Ascending aorta (tissue), 2 donors: ENCODE measurements at regions of chr17 and their contacts with region 1.

Region 1: DNA sequence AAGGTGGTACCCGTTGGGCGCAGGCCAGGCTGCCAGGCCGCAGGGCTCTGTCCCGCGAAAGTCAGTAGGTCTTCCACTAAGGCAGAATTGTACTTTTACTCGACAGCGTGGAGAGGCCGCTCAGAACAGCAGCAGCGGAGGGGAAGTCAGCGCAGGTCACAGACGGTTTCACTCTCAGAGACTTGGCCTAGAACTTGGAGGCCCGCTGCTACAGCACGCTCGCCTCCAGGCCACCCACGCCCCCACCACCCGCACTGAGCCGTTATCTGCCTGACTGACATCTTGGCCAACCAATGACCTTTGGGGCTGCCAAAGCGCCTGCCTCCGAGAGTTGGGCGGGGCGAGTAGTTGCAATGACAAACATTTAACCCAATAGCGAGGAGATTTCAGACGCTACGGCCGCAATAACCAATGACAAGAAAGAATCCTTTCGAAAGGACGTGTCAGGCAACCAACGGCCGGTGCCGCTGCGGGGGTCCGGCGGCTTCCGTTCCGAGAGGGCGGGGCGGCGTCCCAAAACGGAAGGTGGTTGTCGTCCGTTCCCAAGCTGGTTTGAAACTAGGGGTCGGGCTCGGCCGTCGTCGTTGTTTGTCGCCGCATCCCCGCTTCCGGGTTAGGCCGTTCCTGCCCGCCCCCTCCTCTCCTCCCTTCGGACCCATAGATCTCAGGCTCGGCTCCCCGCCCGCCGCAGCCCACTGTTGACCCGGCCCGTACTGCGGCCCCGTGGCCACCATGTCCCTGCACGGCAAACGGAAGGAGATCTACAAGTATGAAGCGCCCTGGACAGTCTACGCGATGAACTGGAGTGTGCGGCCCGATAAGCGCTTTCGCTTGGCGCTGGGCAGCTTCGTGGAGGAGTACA is at the start of gene DCAF7:
- DNase-seq: peak; percentile 97 to 100
- H3K4me3 ChIP-seq: peak within 1 kb of the TSS; percentile 55 to 83
- H3K27ac ChIP-seq: peak within 1 kb of the TSS; percentile 77 to 90
- H3K4me1 ChIP-seq: peaks cover 0 to 15% of the 10 kb centered on the region in 2 donors
- H3K27me3 ChIP-seq: no peaks in the 10 kb centered on the region
- CTCF ChIP-seq: no peak
- total RNA-seq, gene DCAF7: 18.6 TPM

Region 2: GRCh38 chr17:63337579-63337978 is 212.6 kb before region 1 on chr17:
- intact Hi-C with region 1: no loop called
- DNase-seq: no peak
- H3K4me3 ChIP-seq: no peak overlapping the region
- H3K27ac ChIP-seq: no peak overlapping the region
- H3K4me1 ChIP-seq: peaks cover 0 to 3% of the 10 kb centered on the region in 2 donors
- H3K27me3 ChIP-seq: no peaks in the 10 kb centered on the region
- CTCF ChIP-seq: no peak

Region 3: GRCh38 chr17:63433746-63434591 is 116.2 kb before region 1 on chr17:
- intact Hi-C with region 1: loop called (anchors 1 kb)
- DNase-seq: peak; percentile 56 to 93
- H3K4me3 ChIP-seq: peak overlapping the region in 1 of 2 donors; percentile 17
- H3K27ac ChIP-seq: peak overlapping the region in 1 of 2 donors; percentile 45
- H3K4me1 ChIP-seq: peaks cover 21 to 26% of the 10 kb centered on the region in 2 donors
- H3K27me3 ChIP-seq: no peaks in the 10 kb centered on the region
- CTCF ChIP-seq: no peak

Region 4: DNA sequence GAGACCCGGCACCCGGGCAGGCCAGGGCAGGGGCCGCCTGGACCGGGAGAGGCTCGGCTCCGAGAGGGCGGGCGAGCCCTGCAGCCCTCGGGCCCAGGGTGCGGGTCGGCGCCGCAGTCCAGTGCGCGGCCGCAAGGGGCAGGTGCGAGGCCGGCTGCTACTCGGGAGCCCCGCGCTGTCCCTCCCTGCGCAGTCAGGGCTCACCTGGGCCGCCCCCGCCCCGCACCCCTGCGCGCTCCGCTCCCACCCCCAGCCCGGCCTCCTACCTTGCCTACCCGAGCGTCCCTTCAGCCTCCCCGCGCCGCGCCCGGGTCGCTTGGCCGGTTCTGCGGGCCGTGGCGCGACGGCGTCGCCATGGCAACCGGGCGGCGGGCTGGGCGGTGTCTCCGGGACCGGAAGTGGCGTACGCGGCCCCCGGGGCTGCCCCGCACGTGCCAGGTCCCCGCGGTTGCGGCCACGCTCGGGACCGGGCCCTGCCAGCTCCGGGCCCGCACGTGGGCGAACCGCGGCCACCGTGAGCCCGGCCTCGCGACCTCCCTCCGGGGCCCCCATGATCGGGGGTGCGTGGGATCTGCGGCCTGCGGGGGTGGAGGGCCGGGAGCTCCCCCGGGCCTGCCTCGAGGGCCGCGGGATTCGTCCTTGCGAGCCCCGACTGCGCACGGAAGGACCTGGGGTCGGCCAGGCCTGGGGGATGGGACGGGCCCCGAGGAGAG is 104.0 kb before region 1 on chr17 and contains the start of gene CYB561:
- intact Hi-C with region 1: loop called (anchors 1 kb)
- DNase-seq: peak in 1 of 2 donors; percentile 80
- H3K4me3 ChIP-seq: peak within 1 kb of the TSS; percentile 75 to 82
- H3K27ac ChIP-seq: peak within 1 kb of the TSS; percentile 14 to 79
- H3K4me1 ChIP-seq: peaks cover 8 to 9% of the 10 kb centered on the region in 2 donors
- H3K27me3 ChIP-seq: no peaks in the 10 kb centered on the region
- CTCF ChIP-seq: peak in 2 of 3 experiments; percentile 29 to 43
- total RNA-seq, gene CYB561: 23.0 TPM